PC-3 (cell line): ENCODE measurements at regions of chr18 and their contacts with region 1.

Region 1: GRCh38 chr18:9102508-9103375 is at the start of gene NDUFV2:
- DNase-seq: peak; percentile 97
- ATAC-seq: peak; percentile 81
- H3K4me3 ChIP-seq: peak within 1 kb of the TSS; percentile 73
- H3K27ac ChIP-seq: peak within 1 kb of the TSS; percentile 80
- H3K4me1 ChIP-seq: peaks cover 55% of the 10 kb centered on the region
- H3K27me3 ChIP-seq: no peaks in the 10 kb centered on the region
- CTCF ChIP-seq: no peak
- total RNA-seq, gene NDUFV2: 188 and 272 TPM in 2 replicates

Region 2: GRCh38 chr18:9082711-9083510 is 19.8 kb before region 1 on chr18:
- CTCF ChIA-PET with region 1: no interaction called
- POLR2A ChIA-PET with region 1: no interaction called
- intact Hi-C with region 1: no loop called
- DNase-seq: no peak
- ATAC-seq: no peak
- H3K4me3 ChIP-seq: no peak overlapping the region
- H3K27ac ChIP-seq: no peak overlapping the region
- H3K4me1 ChIP-seq: peaks cover 4% of the 10 kb centered on the region; the same call in 1 of the 2 replicates
- H3K27me3 ChIP-seq: no peaks in the 10 kb centered on the region
- CTCF ChIP-seq: no peak

Region 3: GRCh38 chr18:9117980-9118841 is 15.5 kb after region 1 on chr18:
- CTCF ChIA-PET with region 1: no interaction called
- POLR2A ChIA-PET with region 1: interaction called, 18 read pairs
- intact Hi-C with region 1: loop called (anchors 1 kb)
- DNase-seq: no peak
- ATAC-seq: no peak
- H3K4me3 ChIP-seq: 0 out of 2 replicates have a peak overlapping the region, but pooled peaks have one; percentile 36
- H3K27ac ChIP-seq: peak overlapping the region; percentile 70
- H3K4me1 ChIP-seq: peaks cover 23% of the 10 kb centered on the region
- H3K27me3 ChIP-seq: no peaks in the 10 kb centered on the region
- CTCF ChIP-seq: no peak

Region 4: DNA sequence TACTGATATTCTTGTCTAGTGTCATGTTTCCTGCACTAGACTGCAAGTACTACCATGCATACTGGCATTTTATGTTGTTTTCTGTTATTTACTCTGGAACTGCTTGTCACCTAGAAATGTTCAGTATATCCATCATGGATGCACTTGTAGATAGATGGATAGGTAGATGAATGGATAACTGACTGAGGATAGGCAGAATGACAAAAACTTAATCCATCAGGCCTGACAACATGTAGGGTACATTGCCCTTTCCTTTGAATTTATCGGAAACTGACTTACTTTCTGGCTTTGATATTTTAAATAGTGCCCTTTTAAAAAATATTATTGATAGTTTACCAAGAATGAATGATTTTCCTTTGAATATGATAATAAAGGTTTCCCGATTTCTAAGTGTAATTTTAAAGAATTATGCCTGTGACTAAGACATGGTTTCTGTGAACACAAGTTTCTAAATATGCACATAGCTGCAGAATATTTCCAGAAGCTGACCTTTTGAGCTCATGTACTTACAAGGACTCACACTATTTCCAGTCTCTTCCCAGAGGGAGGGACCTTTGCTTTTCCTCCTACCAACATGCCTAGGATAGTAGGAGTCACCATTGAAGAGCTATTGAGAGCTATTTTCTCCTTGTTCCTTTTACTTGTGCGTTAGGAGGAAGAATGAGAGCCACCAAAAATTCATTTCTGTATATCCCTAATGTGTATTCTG is 115.2 kb after region 1 on chr18:
- CTCF ChIA-PET with region 1: no interaction called
- POLR2A ChIA-PET with region 1: interaction called, 14 read pairs
- intact Hi-C with region 1: no loop called
- DNase-seq: no peak
- ATAC-seq: no peak
- H3K4me3 ChIP-seq: no peak overlapping the region
- H3K27ac ChIP-seq: no peak overlapping the region
- H3K4me1 ChIP-seq: no peaks in the 10 kb centered on the region
- H3K27me3 ChIP-seq: no peaks in the 10 kb centered on the region
- CTCF ChIP-seq: no peak